Prostate gland (tissue), 2 donors: ENCODE measurements at regions of chr9 and their contacts with region 1.

Region 1: DNA sequence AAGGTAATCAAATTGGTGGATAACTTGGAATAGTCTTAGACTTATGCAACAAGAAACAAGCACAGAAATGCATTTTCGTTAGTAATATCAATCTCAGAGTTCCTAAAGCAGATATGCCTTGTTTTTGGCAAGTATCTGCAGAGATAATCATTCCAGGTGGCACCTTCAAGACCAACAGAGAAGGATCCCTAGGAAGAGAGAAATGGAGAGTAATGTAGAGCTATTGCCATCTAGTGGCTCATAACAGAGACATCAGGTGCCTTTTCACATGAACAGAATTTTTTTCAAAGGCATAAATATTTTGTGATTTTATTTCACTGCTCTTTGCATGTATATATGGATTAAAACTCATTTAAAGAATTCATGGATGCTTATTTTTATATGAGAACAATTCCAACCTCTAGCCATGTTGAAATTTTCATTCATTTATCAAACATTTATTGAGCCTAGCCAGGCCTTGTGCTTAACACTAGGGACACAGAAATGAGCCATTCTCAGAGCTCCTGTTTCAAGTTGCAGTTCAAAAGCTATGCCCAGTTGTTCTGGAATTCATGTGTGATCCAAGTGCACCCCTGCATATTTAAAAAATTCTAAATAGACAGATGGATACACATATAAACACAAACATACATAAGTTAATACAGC is 117.5 kb upstream of the OR13F1 start:
- DNase-seq: no peak
- H3K4me3 ChIP-seq: no peak overlapping the region
- H3K27ac ChIP-seq: no peak overlapping the region
- H3K4me1 ChIP-seq: no peaks in the 10 kb centered on the region
- H3K27me3 ChIP-seq: no peaks in the 10 kb centered on the region
- CTCF ChIP-seq: peak in 3 of 4 experiments; percentile 45 to 60 (median 50)
- POLR2A ChIP-seq: no peak

Region 2: DNA sequence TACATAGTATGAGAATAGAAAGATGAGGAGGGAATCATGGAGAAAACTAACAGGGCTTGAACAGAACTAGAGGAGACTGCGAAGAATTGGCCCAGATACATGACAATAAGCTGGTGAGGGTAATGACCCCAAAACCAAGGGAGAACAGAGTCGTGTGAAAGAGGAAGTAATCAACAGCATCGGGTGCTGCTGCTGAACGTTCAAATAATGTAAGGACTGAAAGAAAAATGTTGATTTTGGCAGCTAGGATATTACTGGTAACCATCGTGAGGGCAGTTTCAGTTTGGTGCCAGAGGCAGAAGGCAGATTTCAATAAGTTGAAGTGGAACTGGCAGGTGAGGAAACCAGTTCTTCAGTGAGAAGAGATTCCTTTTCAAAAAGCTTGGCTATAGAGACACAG is 359.3 kb before region 1 on chr9:
- intact Hi-C with region 1: loop called (anchors 5 kb)
- DNase-seq: no peak
- H3K4me3 ChIP-seq: no peak overlapping the region
- H3K27ac ChIP-seq: no peak overlapping the region
- H3K4me1 ChIP-seq: no peaks in the 10 kb centered on the region
- H3K27me3 ChIP-seq: no peaks in the 10 kb centered on the region
- CTCF ChIP-seq: no peak
- POLR2A ChIP-seq: no peak

Region 3: DNA sequence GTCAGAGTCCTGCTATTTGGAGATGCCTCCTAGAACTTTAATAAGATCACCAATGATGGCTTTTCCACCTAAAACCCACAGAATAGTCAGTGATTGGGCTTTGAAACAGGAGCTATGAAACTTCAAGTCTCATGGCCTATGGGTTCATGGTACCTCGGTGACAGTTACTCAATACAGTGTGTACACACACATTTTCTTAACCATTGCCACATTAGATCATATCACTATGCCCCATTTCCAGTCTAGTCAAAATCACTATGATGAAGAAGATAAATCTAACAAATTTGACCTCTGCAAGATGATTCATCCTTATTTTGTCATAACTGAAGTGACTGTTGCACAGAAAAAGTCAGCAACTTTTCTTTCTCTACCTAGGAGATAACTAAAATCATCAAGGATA is 30.7 kb after region 1 on chr9:
- intact Hi-C with region 1: no loop called
- DNase-seq: no peak
- H3K4me3 ChIP-seq: no peak overlapping the region
- H3K27ac ChIP-seq: no peak overlapping the region
- H3K4me1 ChIP-seq: no peaks in the 10 kb centered on the region
- H3K27me3 ChIP-seq: no peaks in the 10 kb centered on the region
- CTCF ChIP-seq: no peak
- POLR2A ChIP-seq: no peak